Psoas muscle (tissue), 8 donors: ENCODE measurements at regions of chr3 and their contacts with region 1.

Region 1: GRCh38 chr3:9946112-9947024 is 5.8 kb downstream of the PRRT3 start:
- DNase-seq: peak; percentile 90 to 93
- ATAC-seq: peak; percentile 70 to 80 (median 78)
- H3K4me3 ChIP-seq: peak overlapping the region; percentile 81
- H3K27ac ChIP-seq: peak overlapping the region; percentile 81
- H3K4me1 ChIP-seq: no peaks in the 10 kb centered on the region
- H3K27me3 ChIP-seq: no peaks in the 10 kb centered on the region
- CTCF ChIP-seq: peak; percentile 61

Region 2: GRCh38 chr3:10137151-10137550 is 190.8 kb after region 1 on chr3:
- intact Hi-C with region 1: loop called in 1 of 2 experiments (anchors 10 kb)
- DNase-seq: no peak
- ATAC-seq: no peak
- H3K4me3 ChIP-seq: no peak overlapping the region
- H3K27ac ChIP-seq: no peak overlapping the region
- H3K4me1 ChIP-seq: no peaks in the 10 kb centered on the region
- H3K27me3 ChIP-seq: no peaks in the 10 kb centered on the region
- CTCF ChIP-seq: no peak